Sciatic nerve (tissue), 2 donors: ENCODE measurements at regions of chr20 and their contacts with region 1.

Region 1: DNA sequence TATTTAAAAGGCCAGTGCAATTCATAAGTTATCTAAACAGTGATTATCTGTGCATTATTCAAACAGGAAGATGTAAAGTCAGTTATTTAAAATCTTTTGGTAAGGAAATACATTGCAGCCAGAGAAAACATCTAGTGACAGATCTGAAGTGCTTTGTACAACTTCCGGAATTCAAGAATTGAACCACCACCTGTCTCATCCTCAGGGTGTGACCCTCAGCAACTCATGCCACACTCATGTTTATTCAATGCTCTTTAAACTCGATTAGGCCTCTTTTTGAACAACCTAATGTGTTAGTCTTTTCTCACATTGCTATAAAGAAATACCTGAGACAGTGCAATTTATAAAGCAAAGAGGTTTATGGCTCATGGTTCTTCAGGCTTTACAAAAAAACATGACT is 62.6 kb upstream of the GGTLC1 start:
- DNase-seq: no peak
- ATAC-seq: no peak

Region 2: GRCh38 chr20:24007073-24007595 is 44.0 kb before region 1 on chr20:
- intact Hi-C with region 1: loop called (anchors 2 kb)
- DNase-seq: no peak
- ATAC-seq: no peak